Calu3 (cell line): ENCODE measurements at regions of chr10 and their contacts with region 1.

Region 1: GRCh38 chr10:35336084-35336831 is at the start of gene CCNY:
- DNase-seq: peak; percentile 74
- H3K4me3 Mint-ChIP-seq: peak within 1 kb of the TSS; percentile 91
- H3K27ac Mint-ChIP-seq: peak within 1 kb of the TSS; percentile 91
- H3K4me1 Mint-ChIP-seq: peaks cover 43% of the 10 kb centered on the region
- H3K27me3 Mint-ChIP-seq: no peaks in the 10 kb centered on the region
- CTCF ChIP-seq: no peak
- total RNA-seq, gene CCNY: 59.1 and 60.6 TPM in 2 replicates

Region 2: DNA sequence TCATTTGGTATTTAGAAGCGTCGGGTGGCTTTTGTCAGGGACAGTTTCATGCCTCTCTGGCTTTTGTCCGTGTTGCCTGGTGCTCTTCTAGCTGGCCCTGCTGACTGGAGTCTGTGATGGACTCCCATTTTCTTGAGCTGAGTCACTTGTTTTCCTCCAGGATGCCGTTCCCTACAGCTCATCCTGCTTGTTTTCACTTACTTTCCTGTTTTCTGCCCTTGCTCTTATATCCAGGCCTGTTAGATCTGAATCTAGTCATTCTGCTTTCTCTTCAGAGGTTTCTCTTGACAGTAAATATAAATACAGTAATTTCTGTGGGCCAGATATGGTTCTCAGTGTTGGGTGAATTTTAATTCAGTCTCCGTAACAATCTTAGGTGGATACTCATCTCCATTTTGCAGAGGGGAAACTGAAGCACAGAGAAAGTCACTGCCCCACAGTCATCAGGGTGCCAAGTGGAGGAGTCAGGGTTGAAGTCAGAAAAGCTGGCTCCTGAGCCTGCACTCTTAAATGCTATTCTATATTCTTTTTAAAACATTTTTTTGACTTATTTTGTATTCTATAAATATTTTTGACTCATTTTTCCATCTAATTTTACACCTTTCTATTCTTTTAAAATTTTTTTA is 85.4 kb after region 1 on chr10:
- CTCF ChIA-PET with region 1: no interaction called
- intact Hi-C with region 1: loop called (anchors 5 kb)
- DNase-seq: no peak
- H3K4me3 Mint-ChIP-seq: no peak overlapping the region
- H3K27ac Mint-ChIP-seq: peak overlapping the region; percentile 24
- H3K4me1 Mint-ChIP-seq: peaks cover 35% of the 10 kb centered on the region
- H3K27me3 Mint-ChIP-seq: no peaks in the 10 kb centered on the region
- CTCF ChIP-seq: no peak

Region 3: DNA sequence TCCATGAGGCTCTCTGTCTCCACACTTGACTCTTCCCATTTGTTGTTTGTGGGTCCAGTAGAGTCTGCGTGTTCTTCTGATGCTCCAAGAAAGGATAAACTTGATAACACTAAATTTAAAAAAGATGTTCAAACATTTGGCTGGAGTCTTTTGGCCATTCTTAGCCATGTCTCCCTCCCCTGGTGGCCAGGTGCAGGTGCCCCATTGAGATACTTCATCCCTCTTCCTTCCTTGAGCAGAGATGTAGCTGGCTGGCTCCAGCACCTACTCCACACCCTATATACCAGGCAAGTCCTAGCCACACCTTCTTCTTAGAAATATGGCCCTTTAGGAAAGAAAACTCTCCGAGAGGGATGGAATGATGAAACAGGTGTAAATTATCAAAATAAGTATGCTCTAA is 165.7 kb after region 1 on chr10:
- CTCF ChIA-PET with region 1: no interaction called
- intact Hi-C with region 1: loop called (anchors 5 kb)
- DNase-seq: no peak
- H3K4me3 Mint-ChIP-seq: no peak overlapping the region
- H3K27ac Mint-ChIP-seq: no peak overlapping the region
- H3K4me1 Mint-ChIP-seq: no peaks in the 10 kb centered on the region
- H3K27me3 Mint-ChIP-seq: no peaks in the 10 kb centered on the region
- CTCF ChIP-seq: no peak

Region 4: GRCh38 chr10:35563261-35563891 is 227.1 kb after region 1 on chr10:
- CTCF ChIA-PET with region 1: no interaction called
- intact Hi-C with region 1: loop called (anchors 1 kb)
- DNase-seq: peak; percentile 69
- H3K4me3 Mint-ChIP-seq: no peak overlapping the region
- H3K27ac Mint-ChIP-seq: no peak overlapping the region
- H3K4me1 Mint-ChIP-seq: no peaks in the 10 kb centered on the region
- H3K27me3 Mint-ChIP-seq: no peaks in the 10 kb centered on the region
- CTCF ChIP-seq: peak; percentile 94